ENCODE measurements at regions of chr10 and their contacts with region 1.

Region 1: GRCh38 chr10:32189400-32190084 is 133.3 kb upstream of the KIF5B start:
- DNase-seq: no peak
- ATAC-seq: no peak
- H3K4me3 ChIP-seq: no peak overlapping the region
- H3K4me3 Mint-ChIP-seq: no peak overlapping the region
- H3K27ac ChIP-seq: no peak overlapping the region
- H3K27ac Mint-ChIP-seq: no peak overlapping the region
- H3K4me1 ChIP-seq: no peaks in the 10 kb centered on the region
- H3K4me1 Mint-ChIP-seq: peaks cover 0 to 4% (median 2%) of the 10 kb centered on the region in 3 donors
- H3K27me3 ChIP-seq: peaks cover 0 to 4% of the 10 kb centered on the region in 2 experiments
- H3K27me3 Mint-ChIP-seq: no peaks in the 10 kb centered on the region

Region 2: DNA sequence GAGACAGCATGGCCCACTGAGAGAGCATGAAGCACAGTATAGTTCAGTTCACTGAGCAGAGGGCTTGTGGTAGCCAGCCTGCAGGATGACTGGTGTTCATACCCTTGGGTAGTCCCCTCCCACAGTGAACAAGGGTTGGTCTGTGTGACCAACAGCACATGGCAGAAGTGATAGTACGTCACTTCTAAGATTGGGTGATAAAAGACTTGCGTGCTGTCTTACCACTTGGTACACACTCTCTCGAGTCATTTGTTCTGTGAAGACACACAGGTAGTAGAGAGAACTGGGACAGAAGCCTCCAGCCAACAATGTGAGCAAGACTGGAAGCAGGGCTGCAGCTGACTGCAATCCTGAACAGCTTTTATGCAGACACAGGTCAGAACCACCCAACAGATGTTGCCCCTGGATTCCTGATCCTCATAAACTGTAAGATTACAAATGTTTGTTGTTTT is 142.8 kb after region 1 on chr10:
- CTCF ChIA-PET with region 1: no interaction called
- POLR2A ChIA-PET with region 1: no interaction called
- DNase-seq: peak in 34 of 35 experiments; percentile 34 to 89 (median 74)
- ATAC-seq: peak; percentile 91 to 93 (median 92)
- H3K4me3 ChIP-seq: no peak overlapping the region
- H3K4me3 Mint-ChIP-seq: peak overlapping the region; percentile 41 to 75 (median 63)
- H3K27ac ChIP-seq: peak overlapping the region; percentile 38
- H3K27ac Mint-ChIP-seq: peak overlapping the region; percentile 75
- H3K4me1 ChIP-seq: peaks cover 45 to 50% of the 10 kb centered on the region in 2 experiments
- H3K4me1 Mint-ChIP-seq: peaks cover 96 to 97% (median 97%) of the 10 kb centered on the region in 3 donors
- H3K27me3 ChIP-seq: no peaks in the 10 kb centered on the region
- H3K27me3 Mint-ChIP-seq: no peaks in the 10 kb centered on the region

Region 3: DNA sequence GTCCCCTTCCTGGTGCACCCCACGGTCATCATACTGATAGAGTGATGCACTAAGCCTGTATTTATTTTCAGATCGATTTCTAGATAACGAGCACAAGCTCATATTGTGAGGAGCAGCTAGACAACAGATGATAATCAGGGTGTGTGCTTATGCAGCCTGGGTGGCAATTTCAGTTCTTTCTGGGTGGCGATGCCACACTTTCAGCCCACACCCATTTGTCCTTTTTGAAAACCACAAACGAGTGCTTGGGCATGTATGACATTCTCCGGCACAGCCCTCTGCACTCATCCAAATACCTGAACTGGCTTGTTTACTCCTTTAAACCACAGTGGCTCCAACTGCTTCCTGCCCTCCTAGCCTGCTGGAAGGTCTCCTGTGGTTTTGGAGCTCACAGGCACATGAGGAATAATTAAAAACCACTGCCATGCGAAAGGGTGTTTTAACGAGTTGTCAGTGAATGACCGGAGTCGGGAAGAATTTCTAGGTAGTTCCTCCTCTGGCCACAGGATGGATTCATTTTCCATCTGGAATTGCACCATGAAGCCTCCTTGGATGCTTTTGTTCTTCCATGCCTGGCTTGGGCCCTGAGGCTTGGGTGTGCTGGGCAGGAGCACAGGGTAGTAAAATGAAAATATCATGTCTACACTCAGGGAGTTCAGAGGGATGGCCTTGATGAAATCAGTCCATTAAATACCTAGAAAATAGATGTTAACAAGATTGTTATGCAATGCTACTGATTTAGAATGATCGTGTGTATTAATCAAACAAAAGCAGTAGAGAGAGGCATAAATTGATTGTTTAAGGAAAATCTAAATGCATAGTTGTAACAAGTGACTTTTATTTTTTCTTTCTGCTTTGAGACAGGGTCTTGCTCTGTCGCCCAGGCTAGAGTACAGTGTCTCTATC is 820.8 kb after region 1 on chr10:
- CTCF ChIA-PET with region 1: interaction called, 4 to 11 read pairs
- POLR2A ChIA-PET with region 1: no interaction called
- DNase-seq: peak in 23 of 35 experiments; percentile 1 to 62 (median 21)
- ATAC-seq: peak; percentile 38 to 66 (median 62)
- H3K4me3 ChIP-seq: no peak overlapping the region
- H3K4me3 Mint-ChIP-seq: peak overlapping the region; percentile 25 to 66 (median 59)
- H3K27ac ChIP-seq: peak overlapping the region; percentile 50
- H3K27ac Mint-ChIP-seq: peak overlapping the region; percentile 93 to 98
- H3K4me1 ChIP-seq: peaks cover 23 to 43% of the 10 kb centered on the region in 2 experiments
- H3K4me1 Mint-ChIP-seq: peaks cover 33 to 63% (median 48%) of the 10 kb centered on the region in 3 donors
- H3K27me3 ChIP-seq: no peaks in the 10 kb centered on the region
- H3K27me3 Mint-ChIP-seq: peaks cover 0 to 5% of the 10 kb centered on the region in 2 donors